Activated CD4-positive, alpha-beta T cell treated with anti-CD3 and anti-CD28 coated beads for 36 hours (primary cell): ENCODE measurements at regions of chr4 and their contacts with region 1.

Region 1: DNA sequence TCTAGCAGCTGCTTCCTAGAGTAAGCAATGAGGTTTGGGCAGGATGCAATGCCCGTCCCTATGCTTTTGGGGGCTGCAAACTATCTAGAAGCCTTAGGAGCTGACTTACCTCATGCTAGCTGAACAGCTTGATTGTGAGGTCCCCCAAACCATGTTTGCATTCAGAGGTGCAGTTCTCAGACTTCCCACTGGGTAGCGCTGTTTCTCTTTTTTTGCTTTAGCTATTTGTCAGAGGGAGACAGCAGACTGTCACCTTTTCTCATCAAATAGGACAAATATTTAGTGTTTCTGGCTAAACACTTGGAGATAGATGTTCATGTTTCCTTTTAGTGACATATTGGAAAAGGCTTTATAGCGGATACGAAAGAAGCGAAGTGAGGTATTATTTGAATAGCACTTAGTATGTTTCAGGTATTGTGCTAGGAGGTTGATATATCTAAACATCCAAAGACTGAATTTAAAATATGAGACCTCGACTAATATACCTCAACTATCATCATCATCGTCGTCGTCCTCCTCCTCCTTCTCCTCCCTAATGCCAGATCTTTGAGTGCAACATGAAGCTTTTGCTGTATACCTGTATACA is 18.7 kb upstream of the TMEM192 start:
- DNase-seq: peak; percentile 85
- ATAC-seq: peak; percentile 82
- H3K4me3 Mint-ChIP-seq: no peak overlapping the region
- H3K27ac Mint-ChIP-seq: no peak overlapping the region
- H3K4me1 Mint-ChIP-seq: peaks cover 3% of the 10 kb centered on the region
- H3K27me3 Mint-ChIP-seq: peaks cover 6% of the 10 kb centered on the region

Region 2: GRCh38 chr4:165118256-165118909 is 13.0 kb before region 1 on chr4:
- CTCF ChIA-PET with region 1: interaction called, 25 read pairs
- POLR2A ChIA-PET with region 1: no interaction called
- intact Hi-C with region 1: no loop called
- DNase-seq: no peak
- ATAC-seq: no peak
- H3K4me3 Mint-ChIP-seq: no peak overlapping the region
- H3K27ac Mint-ChIP-seq: no peak overlapping the region
- H3K4me1 Mint-ChIP-seq: peaks cover 10% of the 10 kb centered on the region
- H3K27me3 Mint-ChIP-seq: peaks cover 4% of the 10 kb centered on the region

Region 3: DNA sequence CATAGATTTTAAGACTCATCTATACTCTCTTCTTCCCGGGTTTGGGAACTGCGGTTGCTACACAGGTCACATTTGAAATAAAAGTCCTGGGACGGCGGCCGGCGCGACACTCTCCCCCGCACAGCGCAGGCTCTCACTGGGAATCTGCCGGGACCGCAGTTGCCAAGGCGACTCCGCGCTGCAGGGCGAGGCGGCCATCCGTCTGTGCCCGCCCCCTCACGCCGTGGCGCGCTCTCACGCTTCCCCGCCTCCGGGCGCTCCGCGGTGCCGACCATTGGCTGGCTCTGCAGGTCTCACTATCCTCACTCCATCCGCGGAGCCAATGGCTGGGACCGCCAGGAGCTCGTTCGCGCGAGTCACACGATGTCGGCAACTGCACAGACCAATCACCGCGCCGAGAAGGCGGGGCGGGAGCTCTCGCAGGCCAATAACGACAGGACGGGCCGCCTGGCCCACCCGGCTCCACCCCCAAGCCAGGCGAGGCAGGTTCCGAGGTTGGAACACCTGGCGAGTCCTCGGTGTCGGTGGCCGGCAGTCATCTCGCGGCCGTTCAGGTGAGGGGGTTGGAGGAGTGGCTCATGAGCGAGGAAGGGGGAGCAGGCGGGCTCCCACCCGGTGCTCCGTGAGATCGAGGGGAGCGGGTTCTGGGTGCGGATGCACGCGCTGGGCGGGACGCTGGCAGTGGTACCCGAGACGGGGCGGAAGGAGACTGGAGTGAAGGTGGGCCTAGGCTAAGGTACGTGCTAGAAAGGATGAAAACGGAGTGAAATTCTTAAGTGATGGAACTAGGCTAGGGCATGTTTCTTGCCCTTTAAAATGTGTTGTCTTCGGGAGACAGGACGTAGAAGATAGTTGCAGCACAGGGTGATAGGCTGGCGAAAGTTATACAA is 196.1 kb after region 1 on chr4 and contains the start of gene MSMO1:
- CTCF ChIA-PET with region 1: interaction called, 6 read pairs
- POLR2A ChIA-PET with region 1: no interaction called
- intact Hi-C with region 1: loop called (anchors 5 kb)
- DNase-seq: peak; percentile 99
- ATAC-seq: peak; percentile 98
- H3K4me3 Mint-ChIP-seq: no peak within 1 kb of the TSS
- H3K27ac Mint-ChIP-seq: no peak within 1 kb of the TSS
- H3K4me1 Mint-ChIP-seq: peaks cover 41% of the 10 kb centered on the region
- H3K27me3 Mint-ChIP-seq: no peaks in the 10 kb centered on the region
- total RNA-seq, gene MSMO1: 48.4 to 50.7 TPM

Region 4: GRCh38 chr4:165355900-165356300 is 224.6 kb after region 1 on chr4:
- CTCF ChIA-PET with region 1: interaction called, 11 read pairs
- POLR2A ChIA-PET with region 1: no interaction called
- intact Hi-C with region 1: no loop called
- DNase-seq: peak; percentile 33
- ATAC-seq: peak; percentile 53
- H3K4me3 Mint-ChIP-seq: no peak overlapping the region
- H3K27ac Mint-ChIP-seq: no peak overlapping the region
- H3K4me1 Mint-ChIP-seq: no peaks in the 10 kb centered on the region
- H3K27me3 Mint-ChIP-seq: peaks cover 21% of the 10 kb centered on the region

Region 5: DNA sequence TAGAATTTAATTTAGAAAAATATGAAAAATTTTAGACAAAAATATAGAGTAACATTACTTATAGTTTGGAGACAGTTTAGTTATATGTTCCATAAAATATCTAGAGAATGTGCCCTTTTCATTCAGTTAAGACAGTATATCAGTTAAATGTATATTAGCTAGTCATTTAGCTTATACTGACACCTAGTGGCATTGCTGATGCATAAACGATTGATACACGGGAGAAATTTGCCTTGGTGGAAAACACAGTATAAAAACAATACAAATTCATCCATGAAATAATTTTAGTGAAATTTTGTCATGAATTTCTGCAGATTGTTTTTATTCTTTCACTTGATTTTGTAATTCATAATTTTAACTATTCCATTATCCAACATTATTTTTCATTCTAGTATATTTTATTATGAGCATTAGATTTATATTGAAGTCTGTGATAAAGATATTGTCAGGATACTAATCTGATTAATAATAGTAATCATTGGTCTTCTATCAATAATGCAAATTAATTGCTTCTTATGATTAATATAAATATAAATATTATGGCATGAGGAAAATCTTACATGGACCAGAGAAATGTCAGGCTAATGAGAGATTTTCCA is 960.7 kb after region 1 on chr4:
- CTCF ChIA-PET with region 1: no interaction called
- POLR2A ChIA-PET with region 1: no interaction called
- intact Hi-C with region 1: loop called in 1 of 2 experiments (anchors 10 kb)
- DNase-seq: no peak
- ATAC-seq: no peak
- H3K4me3 Mint-ChIP-seq: no peak overlapping the region
- H3K27ac Mint-ChIP-seq: no peak overlapping the region
- H3K4me1 Mint-ChIP-seq: no peaks in the 10 kb centered on the region
- H3K27me3 Mint-ChIP-seq: no peaks in the 10 kb centered on the region